Activated CD8-positive, alpha-beta T cell treated with anti-CD3 and anti-CD28 coated beads, Interleukin-2, amount 10 ng/mL, durations not matched to agents 7 days and 5 days (primary cell): ENCODE measurements at regions of chr17 and their contacts with region 1.

Region 1: GRCh38 chr17:79839363-79840268 is at the start of gene CBX4:
- DNase-seq: peak; percentile 94
- ATAC-seq: peak; percentile 73
- H3K4me3 Mint-ChIP-seq: peak within 1 kb of the TSS; percentile 97
- H3K27ac Mint-ChIP-seq: peak within 1 kb of the TSS; percentile 99
- H3K4me1 Mint-ChIP-seq: peaks cover 49% of the 10 kb centered on the region
- H3K27me3 Mint-ChIP-seq: peaks cover 30% of the 10 kb centered on the region
- total RNA-seq, gene CBX4: 50.3 to 57.2 TPM

Region 2: GRCh38 chr17:79777894-79778503 is 61.6 kb before region 1 on chr17 and contains the start of gene CBX2:
- CTCF ChIA-PET with region 1: interaction called, 17 read pairs
- POLR2A ChIA-PET with region 1: interaction called, 4 read pairs
- DNase-seq: peak; percentile 84
- ATAC-seq: peak; percentile 86
- H3K4me3 Mint-ChIP-seq: peak within 1 kb of the TSS; percentile 91
- H3K27ac Mint-ChIP-seq: peak within 1 kb of the TSS; percentile 65
- H3K4me1 Mint-ChIP-seq: peaks cover 54% of the 10 kb centered on the region
- H3K27me3 Mint-ChIP-seq: peaks cover 38% of the 10 kb centered on the region
- total RNA-seq, gene CBX2: 16.2 to 16.5 TPM

Region 3: DNA sequence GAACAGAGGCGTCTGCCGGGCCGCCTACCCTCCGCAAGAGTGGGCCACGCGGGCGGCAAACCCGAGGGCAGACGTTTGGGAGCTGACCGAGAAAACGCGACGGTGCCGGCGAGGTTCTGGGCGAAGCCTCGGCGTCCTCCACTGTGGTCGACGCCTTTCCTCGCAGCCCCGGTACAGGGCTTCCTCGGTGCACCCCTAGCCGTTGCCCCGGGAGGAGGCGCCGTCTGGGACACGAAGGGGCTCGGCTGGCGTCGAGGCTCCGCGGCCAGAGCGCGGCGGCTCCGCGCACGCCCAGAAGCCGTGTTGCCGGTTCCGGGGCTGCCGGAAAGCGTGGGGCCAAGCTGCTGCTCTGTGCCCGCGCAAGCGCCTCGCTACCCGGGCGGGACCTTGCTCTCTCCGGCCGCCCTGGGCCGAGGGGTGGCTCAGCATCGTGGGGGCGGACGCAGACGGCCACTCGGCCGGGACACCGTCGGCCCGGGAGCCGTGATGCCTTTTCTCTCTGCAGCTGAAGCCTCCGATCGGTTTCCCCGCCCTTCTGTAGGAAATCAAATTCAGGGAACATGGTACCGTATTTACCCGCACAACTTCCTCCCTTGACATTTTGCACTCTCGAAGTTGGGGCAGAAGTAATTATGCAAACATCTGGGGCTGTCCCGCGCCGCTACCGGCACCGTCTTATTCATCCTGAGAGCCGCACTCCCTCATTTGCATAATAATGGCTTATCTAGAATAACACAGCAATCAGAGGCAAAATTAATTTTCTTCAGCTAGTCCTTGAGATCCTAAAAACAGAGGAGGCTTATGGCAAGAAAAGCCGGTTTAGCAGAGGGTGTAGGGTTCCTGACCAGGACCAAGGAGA is 35.4 kb before region 1 on chr17:
- CTCF ChIA-PET with region 1: interaction called, 94 read pairs
- POLR2A ChIA-PET with region 1: interaction called, 13 read pairs
- DNase-seq: peak; percentile 67
- ATAC-seq: peak; percentile 43
- H3K4me3 Mint-ChIP-seq: peak overlapping the region; percentile 63
- H3K27ac Mint-ChIP-seq: peak overlapping the region; percentile 73
- H3K4me1 Mint-ChIP-seq: peaks cover 56% of the 10 kb centered on the region
- H3K27me3 Mint-ChIP-seq: peaks cover 80% of the 10 kb centered on the region

Region 4: DNA sequence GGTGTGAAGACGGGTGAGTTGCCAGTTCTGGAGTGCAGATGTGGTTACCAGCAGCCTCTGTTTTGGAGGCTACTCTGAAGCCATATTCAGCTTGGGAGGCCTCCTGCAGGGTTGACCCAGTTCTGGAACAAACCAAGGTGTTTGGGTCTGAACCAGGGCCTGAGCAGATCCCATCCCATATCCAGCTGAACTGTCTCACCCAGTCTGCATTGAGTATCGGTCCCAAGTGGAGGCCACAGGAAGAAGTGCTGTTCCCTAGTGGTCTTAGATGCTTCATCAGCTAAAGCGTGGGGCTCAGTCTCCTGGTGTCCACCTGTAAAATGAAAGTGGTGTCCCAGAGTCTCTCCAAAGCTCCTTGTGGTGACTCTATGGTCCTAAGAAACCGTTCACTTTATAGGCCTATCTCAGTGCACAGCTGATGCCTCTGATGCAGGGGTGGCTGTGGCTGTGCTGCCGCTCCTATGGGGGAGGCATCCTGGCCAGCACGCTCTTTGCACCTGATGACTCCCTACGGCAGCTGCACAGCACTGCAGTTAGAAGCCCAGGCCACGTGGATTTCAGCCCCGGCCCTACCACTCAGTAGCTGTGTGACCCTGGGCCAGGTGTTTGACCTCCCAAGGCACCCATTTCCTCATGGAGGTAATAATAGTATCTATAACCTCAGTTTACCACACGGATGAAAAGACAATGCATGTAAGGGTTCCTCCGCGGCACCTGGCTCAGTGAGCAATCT is 21.4 kb before region 1 on chr17:
- CTCF ChIA-PET with region 1: interaction called, 94 read pairs
- POLR2A ChIA-PET with region 1: interaction called, 12 read pairs
- DNase-seq: no peak
- ATAC-seq: no peak
- H3K4me3 Mint-ChIP-seq: no peak overlapping the region
- H3K27ac Mint-ChIP-seq: no peak overlapping the region
- H3K4me1 Mint-ChIP-seq: peaks cover 11% of the 10 kb centered on the region
- H3K27me3 Mint-ChIP-seq: peaks cover 47% of the 10 kb centered on the region

Region 5: DNA sequence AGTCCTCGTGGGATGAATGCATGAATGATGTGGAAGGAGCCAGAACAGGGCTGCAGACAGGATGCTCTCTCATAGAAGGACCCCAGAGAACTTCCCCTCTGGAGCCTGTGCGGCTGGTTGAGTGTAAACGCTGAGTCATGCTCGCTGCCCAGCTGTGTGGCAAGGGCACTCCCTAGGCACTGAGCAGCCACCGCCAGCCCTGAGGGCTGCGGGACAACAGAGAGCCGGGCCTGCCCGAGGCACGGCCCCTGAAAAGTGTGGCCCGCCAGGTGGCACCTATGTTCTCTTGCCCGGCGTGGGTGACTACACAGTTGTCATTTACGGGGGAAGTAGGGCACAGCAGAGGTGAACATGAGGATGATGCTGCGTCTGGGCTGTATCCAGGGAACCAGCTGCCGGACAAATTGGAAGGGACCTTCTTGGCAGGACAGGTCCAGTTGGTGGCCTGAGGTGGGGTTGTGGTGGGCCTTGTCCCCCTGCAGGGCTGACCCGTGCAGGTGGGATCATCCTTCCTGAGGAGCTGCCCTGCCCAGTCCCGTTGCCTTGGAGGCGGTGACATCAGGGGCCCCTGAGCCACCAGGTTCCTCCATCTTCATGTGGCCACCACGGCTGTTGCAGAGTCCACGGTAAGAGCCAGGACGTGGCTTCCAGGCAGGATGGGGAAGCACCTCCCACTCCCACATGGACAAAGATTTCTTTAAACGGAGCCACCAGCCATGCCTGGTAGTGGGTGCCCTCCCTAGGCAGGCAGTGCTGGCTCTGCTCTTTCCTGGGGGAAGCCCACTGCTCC is 94.4 kb after region 1 on chr17:
- CTCF ChIA-PET with region 1: no interaction called
- POLR2A ChIA-PET with region 1: no interaction called
- DNase-seq: no peak
- ATAC-seq: peak; percentile 43
- H3K4me3 Mint-ChIP-seq: no peak overlapping the region
- H3K27ac Mint-ChIP-seq: peak overlapping the region; percentile 33
- H3K4me1 Mint-ChIP-seq: peaks cover 64% of the 10 kb centered on the region
- H3K27me3 Mint-ChIP-seq: peaks cover 24% of the 10 kb centered on the region

Region 6: DNA sequence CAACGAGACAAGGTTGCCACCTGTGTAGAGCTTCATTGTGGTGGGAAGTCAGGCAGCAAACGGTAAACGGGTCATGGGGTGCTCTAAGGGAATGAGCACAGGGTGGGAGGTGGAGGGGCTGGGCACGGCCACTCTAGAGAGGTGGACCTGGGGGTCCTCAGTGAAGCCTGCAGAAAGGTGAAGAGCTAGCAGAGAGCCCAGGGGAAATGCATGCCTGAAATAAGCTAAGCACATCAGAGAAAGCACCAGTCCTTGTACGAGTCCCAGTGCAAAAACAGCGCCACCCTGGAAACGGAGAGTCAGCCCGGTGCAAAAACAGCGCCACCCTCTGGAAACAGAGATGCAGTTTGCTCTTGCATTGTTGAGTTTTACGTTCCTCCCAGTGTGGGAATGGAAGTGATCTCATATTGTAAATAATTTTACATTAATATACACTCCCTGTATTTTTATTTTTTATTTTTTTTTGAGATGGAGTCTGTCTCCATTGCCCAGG is 131.0 kb after region 1 on chr17:
- CTCF ChIA-PET with region 1: interaction called, 20 read pairs
- POLR2A ChIA-PET with region 1: interaction called, 4 read pairs
- DNase-seq: peak; percentile 56
- ATAC-seq: peak; percentile 60
- H3K4me3 Mint-ChIP-seq: no peak overlapping the region
- H3K27ac Mint-ChIP-seq: no peak overlapping the region
- H3K4me1 Mint-ChIP-seq: peaks cover 3% of the 10 kb centered on the region
- H3K27me3 Mint-ChIP-seq: peaks cover 6% of the 10 kb centered on the region